Calu3 (cell line): ENCODE measurements at regions of chr17 and their contacts with region 1.

Region 1: DNA sequence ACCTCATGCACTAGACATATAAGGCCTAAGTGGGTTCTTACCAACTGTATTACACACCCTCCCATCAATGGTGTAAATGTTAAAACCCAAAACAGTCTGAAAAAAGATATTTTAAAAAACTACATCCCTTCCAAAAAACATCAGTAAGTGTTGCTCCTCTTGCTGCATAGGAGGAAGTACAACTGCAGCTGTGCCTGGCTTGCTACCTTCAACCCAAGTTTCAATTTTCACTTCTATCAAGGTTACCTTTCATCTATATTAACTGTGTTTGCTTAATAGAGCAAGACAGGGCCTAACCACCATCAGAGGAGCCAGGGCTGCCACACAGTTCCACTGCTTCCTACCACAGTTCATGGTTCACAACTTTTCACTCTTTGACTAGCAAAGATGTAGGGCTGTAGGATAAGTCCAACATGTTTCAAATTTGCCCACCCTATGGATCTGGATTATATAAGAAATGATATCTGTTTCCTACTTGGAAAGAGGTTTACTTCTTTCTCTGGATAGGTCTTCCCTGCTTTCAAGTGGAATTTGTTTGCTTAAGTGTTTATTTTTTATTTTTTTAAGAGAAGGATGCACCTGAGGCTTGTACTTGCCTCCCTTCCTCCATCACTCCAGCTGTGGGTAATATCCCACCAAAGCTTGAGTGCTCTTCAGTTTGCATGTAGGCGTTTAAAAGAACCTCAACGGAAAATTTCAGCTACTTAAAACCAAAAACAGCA is 56.7 kb downstream of the GRB7 start:
- DNase-seq: peak; percentile 73
- H3K4me3 Mint-ChIP-seq: no peak overlapping the region
- H3K27ac Mint-ChIP-seq: no peak overlapping the region
- H3K4me1 Mint-ChIP-seq: no peaks in the 10 kb centered on the region
- H3K27me3 Mint-ChIP-seq: no peaks in the 10 kb centered on the region
- CTCF ChIP-seq: no peak

Region 2: DNA sequence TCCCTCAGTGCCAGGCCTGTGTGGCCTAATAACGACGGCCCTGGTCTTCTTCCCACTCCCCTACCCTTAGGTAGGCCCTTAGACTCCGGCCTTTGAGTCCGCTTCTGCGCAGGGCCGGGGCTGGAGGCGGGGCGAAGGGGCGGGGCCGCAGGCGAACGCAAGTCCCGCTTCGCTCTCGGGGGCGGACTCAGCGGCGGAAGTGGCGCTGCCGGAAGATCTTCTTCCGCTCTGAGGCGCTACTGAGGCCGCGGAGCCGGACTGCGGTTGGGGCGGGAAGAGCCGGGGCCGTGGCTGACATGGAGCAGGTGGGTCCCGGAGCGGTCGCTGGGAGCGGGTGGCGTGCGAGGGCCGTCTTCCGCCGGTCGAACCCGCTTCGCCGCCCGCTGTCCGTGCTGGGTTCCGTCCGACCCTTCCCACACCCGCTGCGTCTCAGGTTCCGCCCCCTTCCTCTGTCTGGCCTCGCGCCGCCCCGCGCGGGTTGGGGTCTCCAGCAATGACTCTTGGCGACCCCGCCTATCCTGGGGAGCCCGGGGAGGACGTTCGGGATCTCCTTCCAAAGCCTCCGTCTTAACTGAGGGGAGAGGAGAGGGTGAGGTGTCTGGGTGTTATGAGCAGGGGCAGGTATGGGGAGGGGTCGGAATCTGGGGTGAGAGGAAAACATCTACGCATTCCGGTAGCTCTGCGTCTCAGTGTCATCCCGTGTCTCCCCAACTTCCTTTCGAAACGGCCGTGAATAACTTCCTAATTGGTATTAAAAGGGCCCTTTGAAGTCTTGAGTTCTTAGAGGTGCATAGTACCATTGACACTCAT is 157.3 kb before region 1 on chr17 and contains the start of gene STARD3:
- CTCF ChIA-PET with region 1: interaction called, 41 read pairs
- intact Hi-C with region 1: no loop called
- DNase-seq: no peak
- H3K4me3 Mint-ChIP-seq: peak within 1 kb of the TSS; percentile 71
- H3K27ac Mint-ChIP-seq: peak within 1 kb of the TSS; percentile 28
- H3K4me1 Mint-ChIP-seq: peaks cover 61% of the 10 kb centered on the region
- H3K27me3 Mint-ChIP-seq: peaks cover 5% of the 10 kb centered on the region
- CTCF ChIP-seq: no peak
- total RNA-seq, gene STARD3: 2,579 and 2,697 TPM in 2 replicates

Region 3: GRCh38 chr17:39704821-39705551 is 89.4 kb before region 1 on chr17:
- CTCF ChIA-PET with region 1: interaction called, 46 read pairs
- intact Hi-C with region 1: no loop called
- DNase-seq: peak; percentile 99
- H3K4me3 Mint-ChIP-seq: peak overlapping the region; percentile 71
- H3K27ac Mint-ChIP-seq: peak overlapping the region; percentile 67
- H3K4me1 Mint-ChIP-seq: peaks cover 92% of the 10 kb centered on the region
- H3K27me3 Mint-ChIP-seq: no peaks in the 10 kb centered on the region
- CTCF ChIP-seq: no peak

Region 4: DNA sequence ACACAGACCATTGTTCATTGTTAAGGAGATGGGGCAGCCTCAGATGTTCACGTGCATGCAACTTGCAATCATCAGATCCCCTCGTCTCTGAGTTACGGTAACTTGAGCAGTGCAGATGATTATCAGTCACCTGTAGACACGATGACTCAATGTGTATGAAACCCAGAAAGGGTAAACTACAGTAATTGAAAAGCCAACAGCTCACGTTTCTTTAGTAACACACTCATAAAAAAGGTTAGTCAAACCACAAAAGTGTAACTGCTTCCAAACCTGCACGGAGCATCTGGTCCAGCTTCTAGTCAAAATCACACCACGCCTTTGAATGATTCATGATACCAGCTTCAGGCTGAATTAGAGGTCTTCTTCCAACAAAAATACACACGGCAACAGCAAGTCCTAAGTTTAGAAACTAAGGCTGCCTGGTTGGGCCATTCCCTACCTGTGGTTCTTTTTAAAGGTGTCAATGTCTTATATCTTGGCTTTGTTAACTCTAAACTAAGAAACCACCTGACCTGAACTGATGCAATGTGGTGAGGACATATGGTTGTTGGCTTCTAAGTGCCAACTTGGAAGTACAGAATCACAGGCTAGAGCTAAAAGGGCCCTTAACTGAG is 24.3 kb before region 1 on chr17:
- CTCF ChIA-PET with region 1: interaction called, 577 read pairs
- intact Hi-C with region 1: no loop called
- DNase-seq: peak; percentile 100
- H3K4me3 Mint-ChIP-seq: peak overlapping the region; percentile 10
- H3K27ac Mint-ChIP-seq: peak overlapping the region; percentile 60
- H3K4me1 Mint-ChIP-seq: peaks cover 72% of the 10 kb centered on the region
- H3K27me3 Mint-ChIP-seq: peaks cover 13% of the 10 kb centered on the region
- CTCF ChIP-seq: no peak

Region 5: DNA sequence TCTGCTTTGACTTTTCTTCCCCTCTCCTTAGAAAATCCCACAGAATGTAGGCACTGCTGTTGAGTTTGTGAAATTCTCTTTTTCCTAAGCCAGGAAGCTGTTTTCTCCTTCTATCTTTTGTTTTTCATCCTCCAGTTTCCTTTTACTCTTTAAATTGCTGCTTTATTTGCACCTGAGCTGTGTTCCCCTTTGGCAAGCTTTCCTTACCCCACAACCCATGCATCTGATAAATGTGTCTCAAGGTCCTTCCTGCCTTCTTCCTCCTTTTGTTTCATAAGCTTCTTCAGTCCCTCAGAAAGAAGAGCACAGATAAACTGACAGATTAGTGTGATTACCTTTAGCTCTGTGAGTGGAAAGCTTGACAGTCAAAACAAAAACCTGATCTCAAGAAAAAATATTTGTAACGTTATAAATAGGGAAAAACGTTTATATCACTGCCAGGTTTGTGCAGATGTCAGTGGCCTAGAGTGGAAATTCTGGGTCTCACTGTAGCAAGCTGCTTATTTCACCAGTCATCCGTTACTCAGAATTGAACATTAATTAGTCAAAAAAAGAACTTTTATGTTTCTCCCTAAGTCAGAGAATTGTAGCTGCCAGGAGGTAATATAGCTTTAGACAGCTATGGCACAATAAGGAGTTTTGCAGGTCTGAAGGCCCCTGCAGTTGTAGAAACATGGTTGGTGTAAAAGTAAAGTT is 100.4 kb after region 1 on chr17:
- CTCF ChIA-PET with region 1: interaction called, 40 read pairs
- intact Hi-C with region 1: no loop called
- DNase-seq: peak; percentile 63
- H3K4me3 Mint-ChIP-seq: no peak overlapping the region
- H3K27ac Mint-ChIP-seq: no peak overlapping the region
- H3K4me1 Mint-ChIP-seq: peaks cover 23% of the 10 kb centered on the region
- H3K27me3 Mint-ChIP-seq: peaks cover 15% of the 10 kb centered on the region
- CTCF ChIP-seq: no peak

Region 6: DNA sequence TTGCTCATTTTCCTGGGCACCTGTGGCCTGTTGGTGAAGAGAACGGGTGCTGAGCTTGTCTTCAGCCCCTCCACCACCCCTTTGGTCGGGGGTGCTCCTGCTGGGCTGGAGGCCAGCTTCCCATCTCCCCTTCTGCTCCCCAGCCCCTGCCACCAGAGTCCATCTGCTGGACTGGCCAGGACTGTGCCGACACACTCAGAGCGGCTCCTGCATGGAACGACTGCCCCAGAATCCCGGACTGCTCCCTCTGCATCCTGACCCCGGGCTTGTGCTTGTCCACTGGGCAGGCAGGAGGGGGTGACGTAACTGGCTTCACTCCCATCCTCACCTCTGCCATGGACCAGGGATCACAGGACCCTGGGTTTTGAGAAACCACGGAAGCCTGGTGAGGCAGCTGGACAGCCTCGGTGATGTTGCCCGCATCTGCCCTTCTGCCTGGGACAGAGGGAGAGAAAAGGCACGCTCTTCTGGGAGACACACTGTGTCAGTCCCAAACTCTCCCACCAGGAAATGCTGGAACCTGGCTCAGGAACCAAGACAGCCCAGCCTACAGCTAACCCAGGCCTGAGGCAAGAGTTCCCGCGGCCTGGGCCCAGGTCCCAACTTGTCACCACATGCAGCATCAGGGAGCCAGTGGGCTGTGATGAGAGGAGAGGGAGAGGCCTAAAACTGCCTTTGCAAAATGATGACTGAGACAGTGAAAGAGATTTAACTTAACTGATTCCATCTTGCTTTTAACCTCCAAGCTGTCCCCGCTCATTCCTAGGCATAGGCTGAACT is 152.3 kb after region 1 on chr17:
- CTCF ChIA-PET with region 1: interaction called, 18 read pairs
- intact Hi-C with region 1: no loop called
- DNase-seq: peak; percentile 86
- H3K4me3 Mint-ChIP-seq: no peak overlapping the region
- H3K27ac Mint-ChIP-seq: no peak overlapping the region
- H3K4me1 Mint-ChIP-seq: peaks cover 39% of the 10 kb centered on the region
- H3K27me3 Mint-ChIP-seq: peaks cover 57% of the 10 kb centered on the region
- CTCF ChIP-seq: no peak